Activated CD4-positive, alpha-beta T cell treated with anti-CD3 and anti-CD28 coated beads for 36 hours (primary cell): ENCODE measurements at regions of chr7 and their contacts with region 1.

Region 1: DNA sequence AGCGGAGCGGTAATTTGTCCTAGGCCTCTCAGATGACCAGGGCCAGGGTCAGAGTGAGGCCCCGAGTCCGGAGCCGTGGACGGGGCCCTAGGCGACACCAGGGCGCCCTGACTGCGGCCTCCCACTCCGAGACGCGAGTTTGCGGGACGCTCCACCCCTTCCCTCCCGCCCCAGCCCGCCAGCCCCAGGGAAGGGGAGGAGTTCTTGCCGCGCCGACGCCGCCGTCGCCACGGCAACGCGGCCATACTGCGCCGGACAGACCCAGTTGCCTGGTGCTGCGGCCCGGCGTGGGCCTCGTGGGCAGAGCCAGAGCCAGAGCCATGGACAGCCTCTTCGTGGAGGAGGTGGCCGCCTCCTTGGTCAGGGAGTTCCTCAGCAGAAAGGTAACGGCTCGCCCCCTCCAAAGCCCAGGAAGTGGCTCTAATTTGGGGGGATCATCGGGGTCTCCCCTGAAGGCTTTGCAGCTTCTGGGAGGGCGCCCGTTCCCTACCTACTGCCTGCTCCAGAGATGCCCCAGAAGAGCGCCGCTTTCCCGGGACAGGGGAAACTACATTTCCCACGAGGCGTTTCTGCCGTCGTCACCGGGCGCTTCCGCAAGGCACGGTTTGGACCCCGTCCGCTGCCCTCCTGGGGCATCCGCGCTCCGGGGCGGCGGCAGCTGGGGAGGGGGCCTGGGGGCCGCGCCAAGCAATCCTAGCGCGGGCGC is at the start of gene MINDY4:
- DNase-seq: peak; percentile 86
- ATAC-seq: peak; percentile 96
- H3K4me3 Mint-ChIP-seq: peak within 1 kb of the TSS; percentile 75
- H3K27ac Mint-ChIP-seq: peak within 1 kb of the TSS; percentile 74
- H3K4me1 Mint-ChIP-seq: peaks cover 11% of the 10 kb centered on the region
- H3K27me3 Mint-ChIP-seq: no peaks in the 10 kb centered on the region
- total RNA-seq, gene MINDY4: 1.4 to 1.7 TPM

Region 2: GRCh38 chr7:30660331-30661255 is 110.7 kb before region 1 on chr7:
- CTCF ChIA-PET with region 1: no interaction called
- POLR2A ChIA-PET with region 1: no interaction called
- intact Hi-C with region 1: no loop called
- DNase-seq: no peak
- ATAC-seq: no peak
- H3K4me3 Mint-ChIP-seq: no peak overlapping the region
- H3K27ac Mint-ChIP-seq: no peak overlapping the region
- H3K4me1 Mint-ChIP-seq: no peaks in the 10 kb centered on the region
- H3K27me3 Mint-ChIP-seq: no peaks in the 10 kb centered on the region

Region 3: DNA sequence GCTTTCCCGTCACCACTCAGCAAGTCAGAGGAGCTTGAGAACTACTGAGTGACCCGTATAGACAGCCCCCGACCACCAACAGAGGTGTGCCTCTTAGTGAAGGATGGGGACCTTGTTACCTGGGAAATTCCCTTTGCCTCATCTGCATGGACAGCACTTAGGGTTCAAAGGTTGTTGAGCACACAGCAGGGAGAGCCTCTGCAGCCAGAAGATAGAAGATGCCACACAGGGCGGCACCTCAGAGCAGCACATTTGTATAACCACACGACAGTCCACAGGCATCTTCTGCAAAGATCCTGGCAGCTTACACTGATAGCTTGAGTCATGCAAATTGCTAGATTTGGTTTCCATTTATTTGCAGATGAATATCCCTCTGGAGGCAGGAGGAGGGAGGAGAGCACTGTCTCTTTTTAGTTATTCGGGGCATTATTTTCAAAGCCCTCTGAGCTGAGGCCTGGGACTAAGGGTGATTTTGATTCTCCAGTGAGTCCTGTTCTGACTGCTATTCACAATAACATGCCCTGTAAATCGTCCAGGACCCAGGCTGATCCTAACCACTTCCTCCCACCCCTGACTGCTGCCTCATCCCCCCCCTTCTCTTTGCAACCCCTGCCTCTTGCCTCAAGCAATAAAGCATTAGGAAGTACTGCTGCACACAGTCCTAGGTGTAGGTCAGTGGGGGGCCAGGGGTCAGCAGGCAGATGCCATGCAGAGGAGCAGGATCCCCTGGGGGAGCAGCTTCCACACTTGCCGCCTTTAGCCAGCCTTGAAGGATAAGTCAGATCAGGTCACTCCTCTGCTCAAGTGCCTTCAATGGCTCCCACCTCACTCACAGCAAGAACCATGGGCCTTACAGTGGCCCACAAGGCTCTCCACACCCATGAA is 44.0 kb before region 1 on chr7:
- CTCF ChIA-PET with region 1: no interaction called
- POLR2A ChIA-PET with region 1: interaction called, 6 read pairs
- intact Hi-C with region 1: loop called in 1 of 2 experiments (anchors 1 kb)
- DNase-seq: peak; percentile 69
- ATAC-seq: peak; percentile 89
- H3K4me3 Mint-ChIP-seq: peak overlapping the region; percentile 68
- H3K27ac Mint-ChIP-seq: peak overlapping the region; percentile 92
- H3K4me1 Mint-ChIP-seq: peaks cover 60% of the 10 kb centered on the region
- H3K27me3 Mint-ChIP-seq: no peaks in the 10 kb centered on the region